Natural killer cell (primary cell): ENCODE measurements at regions of chr2 and their contacts with region 1.

Region 1: GRCh38 chr2:69436938-69437750 is at the start of gene NFU1:
- DNase-seq: peak; percentile 89 to 93
- ATAC-seq: peak; percentile 89 to 94 (median 89)
- H3K4me3 ChIP-seq: peak within 1 kb of the TSS; percentile 88
- H3K4me3 Mint-ChIP-seq: peak within 1 kb of the TSS; percentile 94
- H3K27ac ChIP-seq: peak within 1 kb of the TSS; percentile 90
- H3K27ac Mint-ChIP-seq: peak within 1 kb of the TSS; percentile 96 to 98
- H3K4me1 ChIP-seq: peaks cover 20% of the 10 kb centered on the region
- H3K4me1 Mint-ChIP-seq: peaks cover 29 to 36% of the 10 kb centered on the region in 2 donors
- H3K27me3 ChIP-seq: no peaks in the 10 kb centered on the region
- H3K27me3 Mint-ChIP-seq: no peaks in the 10 kb centered on the region
- CTCF ChIP-seq: peak; percentile 28
- total RNA-seq, gene NFU1: 21.4 to 25.0 (median 23.6) TPM

Region 2: DNA sequence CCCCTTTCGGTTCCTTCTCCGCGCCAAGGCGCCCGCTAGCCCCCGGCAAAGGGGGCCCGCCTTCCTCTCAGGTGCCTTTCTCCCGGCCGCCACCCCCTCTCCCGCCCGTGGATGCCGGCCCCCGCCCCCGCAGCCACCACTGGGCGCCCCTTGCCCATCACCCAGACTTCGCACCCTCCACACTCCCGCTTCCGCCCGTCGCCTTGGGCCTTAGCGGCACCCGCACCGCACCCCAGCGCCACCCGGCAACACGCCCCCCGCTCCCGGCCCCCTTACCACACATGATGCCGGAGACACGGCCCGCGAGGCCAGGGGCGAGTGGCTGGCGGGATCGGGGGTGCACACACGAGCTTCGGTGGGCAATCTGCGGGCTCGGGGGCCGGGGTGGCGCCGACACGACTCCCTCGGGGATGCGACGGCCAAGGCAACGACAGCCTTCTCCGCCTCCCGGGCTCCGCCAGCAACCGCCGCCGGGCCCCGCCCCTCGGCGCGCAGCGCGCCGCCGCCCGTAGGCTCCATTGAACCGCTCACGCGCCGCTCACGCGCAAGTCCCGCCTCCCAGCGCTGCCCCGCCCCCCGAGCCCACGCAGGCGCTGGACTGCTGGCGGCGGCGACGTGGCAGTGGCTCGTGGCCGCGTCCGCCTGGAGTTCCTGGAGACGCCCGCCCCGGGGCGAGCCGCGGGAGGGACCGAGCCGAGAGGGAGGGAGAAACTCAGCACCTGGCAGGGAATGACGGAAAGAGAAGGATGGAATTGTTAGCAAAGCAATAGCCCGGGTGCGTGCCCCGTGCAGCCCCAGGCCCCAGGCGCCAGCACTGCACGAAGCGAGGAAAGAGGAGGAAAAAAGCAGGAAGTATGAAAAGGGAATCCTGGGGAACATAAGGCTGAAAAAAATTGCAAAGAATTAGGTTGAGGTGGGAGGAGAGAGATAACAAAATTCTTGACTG is 50.1 kb before region 1 on chr2 and contains the start of gene GFPT1:
- intact Hi-C with region 1: loop called (anchors 1 kb)
- DNase-seq: peak; percentile 91 to 97
- ATAC-seq: peak; percentile 97 to 100 (median 98)
- H3K4me3 ChIP-seq: peak within 1 kb of the TSS; percentile 74
- H3K4me3 Mint-ChIP-seq: peak within 1 kb of the TSS; percentile 93
- H3K27ac ChIP-seq: peak within 1 kb of the TSS; percentile 79
- H3K27ac Mint-ChIP-seq: peak within 1 kb of the TSS; percentile 70 to 96
- H3K4me1 ChIP-seq: peaks cover 8% of the 10 kb centered on the region
- H3K4me1 Mint-ChIP-seq: peaks cover 30 to 33% of the 10 kb centered on the region in 2 donors
- H3K27me3 ChIP-seq: no peaks in the 10 kb centered on the region
- H3K27me3 Mint-ChIP-seq: no peaks in the 10 kb centered on the region
- CTCF ChIP-seq: no peak
- total RNA-seq, gene GFPT1: 13.9 to 16.4 (median 15.0) TPM

Region 3: GRCh38 chr2:69499242-69499641 is 62.1 kb after region 1 on chr2:
- intact Hi-C with region 1: no loop called
- DNase-seq: no peak
- ATAC-seq: no peak
- H3K4me3 ChIP-seq: no peak overlapping the region
- H3K4me3 Mint-ChIP-seq: no peak overlapping the region
- H3K27ac ChIP-seq: no peak overlapping the region
- H3K27ac Mint-ChIP-seq: peak overlapping the region; percentile 19 to 77
- H3K4me1 ChIP-seq: peaks cover 6% of the 10 kb centered on the region
- H3K4me1 Mint-ChIP-seq: peaks cover 5 to 17% of the 10 kb centered on the region in 2 donors
- H3K27me3 ChIP-seq: no peaks in the 10 kb centered on the region
- H3K27me3 Mint-ChIP-seq: no peaks in the 10 kb centered on the region
- CTCF ChIP-seq: no peak